ENCODE measurements at regions of chr13 and their contacts with region 1.

Region 1: GRCh38 chr13:27977476-27978300 is 8.6 kb upstream of the CDX2 start:
- DNase-seq: no peak
- H3K4me3 Mint-ChIP-seq: peak overlapping the region; percentile 30
- H3K27ac Mint-ChIP-seq: no peak overlapping the region
- H3K4me1 Mint-ChIP-seq: peaks cover 27% of the 10 kb centered on the region
- H3K27me3 Mint-ChIP-seq: peaks cover 76% of the 10 kb centered on the region

Region 2: GRCh38 chr13:26759907-26760834 is 1217.5 kb before region 1 on chr13 and contains the start of gene GPR12:
- CTCF ChIA-PET with region 1: no interaction called
- intact Hi-C with region 1: no loop called
- DNase-seq: no peak
- H3K4me3 Mint-ChIP-seq: peak within 1 kb of the TSS; percentile 49
- H3K27ac Mint-ChIP-seq: no peak within 1 kb of the TSS
- H3K4me1 Mint-ChIP-seq: peaks cover 9% of the 10 kb centered on the region
- H3K27me3 Mint-ChIP-seq: peaks cover 48% of the 10 kb centered on the region
- total RNA-seq, gene GPR12: not detected

Region 3: GRCh38 chr13:27926644-27927434 is 50.8 kb before region 1 on chr13:
- CTCF ChIA-PET with region 1: interaction called, 3 read pairs
- intact Hi-C with region 1: loop called (anchors 2 kb)
- DNase-seq: no peak
- H3K4me3 Mint-ChIP-seq: peak overlapping the region; percentile 31
- H3K27ac Mint-ChIP-seq: no peak overlapping the region
- H3K4me1 Mint-ChIP-seq: peaks cover 36% of the 10 kb centered on the region
- H3K27me3 Mint-ChIP-seq: peaks cover 88% of the 10 kb centered on the region

Region 4: DNA sequence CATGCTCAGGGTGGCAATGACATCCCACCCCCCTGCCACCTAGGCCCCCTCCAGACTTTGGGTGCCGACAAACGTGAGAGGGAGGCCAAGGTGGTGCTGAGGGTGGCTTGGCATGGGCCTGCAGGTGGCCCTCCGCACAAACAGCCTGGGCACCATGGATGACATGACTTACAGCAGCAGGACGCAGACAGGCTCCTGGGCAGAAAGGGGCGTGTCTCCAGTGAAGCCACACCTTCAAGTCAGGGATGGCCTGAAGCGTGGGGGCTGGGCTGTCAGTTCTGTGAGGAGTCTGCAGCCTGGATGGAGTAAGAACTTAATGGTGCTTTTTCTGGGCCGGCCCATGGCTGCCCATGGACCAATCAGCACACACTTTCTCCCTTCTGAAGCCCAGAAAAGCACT is 706.6 kb after region 1 on chr13:
- CTCF ChIA-PET with region 1: no interaction called
- intact Hi-C with region 1: no loop called
- DNase-seq: no peak
- H3K4me3 Mint-ChIP-seq: no peak overlapping the region
- H3K27ac Mint-ChIP-seq: no peak overlapping the region
- H3K4me1 Mint-ChIP-seq: no peaks in the 10 kb centered on the region
- H3K27me3 Mint-ChIP-seq: no peaks in the 10 kb centered on the region

Measured in activated naive CD4-positive, alpha-beta T cell treated with anti-CD3 and anti-CD28 coated beads for 36 hours (primary cell).